ENCODE measurements at regions of chr22 and their contacts with region 1.

Region 1: DNA sequence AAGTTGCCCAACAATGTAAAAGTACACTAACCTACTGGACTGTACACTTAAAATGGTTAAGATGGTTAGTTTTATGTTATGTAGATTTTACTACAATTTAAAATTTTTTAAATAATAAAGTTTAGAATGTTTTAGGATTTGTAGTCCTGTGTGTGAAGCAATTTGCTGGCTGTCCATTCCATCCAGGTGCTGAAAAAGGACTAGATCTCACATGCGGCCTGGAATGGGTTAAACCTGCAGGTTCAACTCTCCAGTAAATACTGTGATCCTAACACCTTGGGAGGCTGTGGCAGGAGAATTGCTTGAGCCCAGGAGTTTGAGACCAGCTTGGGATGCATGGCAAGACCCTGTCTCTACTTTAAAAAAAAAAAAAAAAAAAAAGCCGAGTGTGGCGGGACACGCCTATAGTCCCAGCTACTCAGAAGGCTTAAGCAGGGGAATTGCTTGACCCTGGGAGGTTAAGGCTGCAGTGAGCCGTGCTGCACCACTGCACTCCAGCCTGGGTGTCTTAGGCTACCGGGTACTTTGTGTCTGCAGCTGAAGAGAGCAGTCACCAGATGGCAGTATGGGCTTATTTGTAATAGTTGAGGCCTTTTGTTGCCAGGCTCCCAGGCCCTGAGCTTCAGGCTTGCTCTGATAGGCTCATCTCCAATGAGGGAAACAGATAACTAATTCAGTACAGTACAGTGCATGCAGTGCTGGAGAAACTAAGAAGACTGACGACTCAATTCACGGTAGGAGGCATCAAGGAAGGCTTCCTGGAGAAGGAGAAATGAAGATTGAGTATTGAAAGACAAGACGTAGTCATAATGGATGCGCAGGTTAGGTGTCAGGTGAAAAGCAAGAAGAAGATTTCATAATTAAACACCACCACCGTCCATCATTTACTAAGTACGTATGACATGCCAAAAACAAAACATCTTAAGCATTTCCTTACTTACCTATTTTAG is 64.7 kb upstream of the ASPHD2 start:
- DNase-seq: peak; percentile 74
- ATAC-seq: peak; percentile 91
- H3K4me3 Mint-ChIP-seq: no peak overlapping the region
- H3K27ac Mint-ChIP-seq: no peak overlapping the region
- H3K4me1 Mint-ChIP-seq: peaks cover 3% of the 10 kb centered on the region
- H3K27me3 Mint-ChIP-seq: peaks cover 9% of the 10 kb centered on the region
- CTCF ChIP-seq: peak; percentile 67

Region 2: DNA sequence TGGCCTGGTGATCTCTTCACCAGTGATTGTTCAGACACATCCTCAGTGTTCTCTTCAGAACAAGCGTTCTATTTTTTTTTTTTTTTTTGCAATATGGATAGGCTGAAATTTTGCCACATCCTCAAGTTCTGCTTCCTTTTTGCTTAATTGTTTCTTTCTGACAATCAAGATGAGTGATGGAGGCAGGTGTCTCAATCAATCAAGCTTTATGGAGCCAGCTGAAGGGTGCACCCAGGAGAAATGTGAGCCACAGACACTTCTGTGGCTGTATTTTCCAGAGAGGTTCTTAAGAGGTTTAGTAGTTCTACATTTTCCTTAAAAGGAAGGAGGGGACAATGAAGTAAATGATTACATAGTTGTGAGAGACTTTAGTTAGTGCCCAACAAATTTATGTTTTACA is 20.8 kb after region 1 on chr22:
- CTCF ChIA-PET with region 1: interaction called, 101 read pairs
- POLR2A ChIA-PET with region 1: no interaction called
- intact Hi-C with region 1: no loop called
- DNase-seq: no peak
- ATAC-seq: no peak
- H3K4me3 Mint-ChIP-seq: no peak overlapping the region
- H3K27ac Mint-ChIP-seq: no peak overlapping the region
- H3K4me1 Mint-ChIP-seq: no peaks in the 10 kb centered on the region
- H3K27me3 Mint-ChIP-seq: peaks cover 32% of the 10 kb centered on the region
- CTCF ChIP-seq: no peak

Region 3: DNA sequence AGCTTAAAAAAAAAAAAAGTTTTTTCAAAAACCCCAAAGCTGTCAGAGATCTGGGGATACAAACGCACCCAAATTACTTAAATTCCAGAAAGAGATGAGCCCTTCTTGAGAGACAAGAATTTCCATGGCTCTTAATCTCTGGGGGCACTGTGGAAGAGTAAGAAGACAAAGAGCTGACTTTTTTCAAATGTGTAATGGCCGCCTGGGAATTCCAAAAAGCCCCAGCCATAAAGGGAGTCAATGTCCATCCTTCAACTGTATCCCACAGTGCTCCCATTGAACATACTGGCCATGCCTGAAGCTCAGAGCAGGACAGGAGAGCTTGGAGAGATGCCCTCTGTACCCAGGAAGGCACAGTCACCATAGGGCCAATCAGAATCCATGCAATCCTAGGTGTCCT is 27.3 kb after region 1 on chr22:
- CTCF ChIA-PET with region 1: interaction called, 101 read pairs
- POLR2A ChIA-PET with region 1: no interaction called
- intact Hi-C with region 1: no loop called
- DNase-seq: no peak
- ATAC-seq: no peak
- H3K4me3 Mint-ChIP-seq: no peak overlapping the region
- H3K27ac Mint-ChIP-seq: no peak overlapping the region
- H3K4me1 Mint-ChIP-seq: no peaks in the 10 kb centered on the region
- H3K27me3 Mint-ChIP-seq: peaks cover 19% of the 10 kb centered on the region
- CTCF ChIP-seq: no peak

Region 4: DNA sequence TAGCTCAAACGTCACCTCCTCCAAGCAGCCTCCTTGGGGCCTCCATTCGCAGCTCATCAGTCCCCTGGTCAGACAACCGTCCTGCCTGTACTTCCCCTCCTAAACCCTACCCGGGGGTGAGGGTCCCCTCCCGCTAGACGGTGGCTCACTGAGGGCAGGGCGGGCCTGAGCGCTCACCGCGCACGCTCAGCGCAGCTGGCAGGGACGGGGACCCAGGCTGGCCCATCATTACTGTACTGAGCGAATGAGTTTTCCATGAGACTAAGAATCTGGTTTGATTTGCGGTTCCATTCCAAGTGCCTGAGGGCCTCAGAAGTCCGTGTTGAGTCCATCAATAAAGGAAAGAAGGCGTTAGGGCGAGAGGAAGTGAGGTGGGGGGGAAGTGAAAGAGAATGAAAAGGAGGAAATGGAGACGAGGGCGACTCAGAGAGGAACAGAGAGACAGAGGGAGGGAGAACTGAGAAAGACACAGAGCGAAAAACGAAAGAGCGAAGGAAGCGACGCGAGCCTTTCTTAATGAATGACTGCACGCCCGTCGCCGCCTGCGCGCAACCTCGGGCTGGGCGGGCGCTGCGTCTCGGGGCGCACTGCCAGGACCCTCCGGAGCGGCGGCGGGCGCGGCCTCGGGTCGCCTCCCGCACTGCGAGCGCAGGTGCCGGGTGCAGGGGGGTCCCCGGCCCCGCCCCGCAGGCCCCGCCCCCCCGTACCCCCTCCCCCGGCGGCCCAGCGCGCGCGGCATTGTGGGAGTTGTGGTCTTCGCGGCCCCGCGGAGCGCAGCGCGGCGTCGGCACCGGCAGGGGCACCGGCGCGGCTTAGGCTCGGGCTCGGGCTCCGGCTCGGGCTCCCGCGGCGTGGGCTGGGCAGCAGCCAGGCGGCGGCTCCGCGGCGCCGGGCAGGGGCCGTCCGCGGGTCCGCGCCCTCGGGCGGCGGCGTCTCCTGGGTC is 64.4 kb after region 1 on chr22 and contains the start of gene ASPHD2:
- CTCF ChIA-PET with region 1: interaction called, 18 read pairs
- POLR2A ChIA-PET with region 1: no interaction called
- intact Hi-C with region 1: no loop called
- DNase-seq: peak; percentile 85
- ATAC-seq: peak; percentile 88
- H3K4me3 Mint-ChIP-seq: peak within 1 kb of the TSS; percentile 100
- H3K27ac Mint-ChIP-seq: peak within 1 kb of the TSS; percentile 100
- H3K4me1 Mint-ChIP-seq: peaks cover 51% of the 10 kb centered on the region
- H3K27me3 Mint-ChIP-seq: peaks cover 5% of the 10 kb centered on the region
- CTCF ChIP-seq: no peak
- total RNA-seq, gene ASPHD2: 12.0 to 14.0 TPM

Region 5: DNA sequence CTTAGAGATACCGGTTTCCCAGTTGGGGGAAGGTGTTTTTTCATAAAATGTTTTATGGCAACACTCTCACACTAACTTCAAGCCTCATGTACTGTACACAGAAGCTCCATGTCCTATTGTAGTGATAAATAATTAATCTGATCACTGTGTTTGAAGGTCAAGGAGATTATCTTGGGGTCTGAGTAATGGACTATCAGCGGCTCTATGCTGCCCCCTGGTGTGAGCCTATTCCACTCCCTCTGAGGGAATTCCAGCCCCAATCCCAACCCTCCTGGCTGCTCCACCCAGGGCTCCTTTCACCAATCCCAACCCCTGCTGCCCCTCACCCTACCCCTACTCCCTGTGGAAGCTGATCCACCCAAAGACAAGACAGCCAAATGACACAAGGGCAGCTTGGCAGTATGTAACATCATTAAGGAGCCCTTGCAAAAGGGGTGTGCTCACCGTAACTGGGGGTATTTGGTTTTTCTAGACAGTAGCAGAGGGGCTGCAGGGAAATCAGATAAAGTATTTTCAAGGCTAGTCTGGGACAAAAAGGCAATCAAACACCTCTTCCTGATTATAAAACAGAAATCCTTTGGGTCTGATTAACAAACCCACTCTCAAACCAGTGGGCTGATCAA is 97.0 kb after region 1 on chr22:
- CTCF ChIA-PET with region 1: interaction called, 71 read pairs
- POLR2A ChIA-PET with region 1: interaction called, 3 read pairs
- intact Hi-C with region 1: no loop called
- DNase-seq: peak; percentile 56
- ATAC-seq: peak; percentile 27
- H3K4me3 Mint-ChIP-seq: no peak overlapping the region
- H3K27ac Mint-ChIP-seq: no peak overlapping the region
- H3K4me1 Mint-ChIP-seq: no peaks in the 10 kb centered on the region
- H3K27me3 Mint-ChIP-seq: no peaks in the 10 kb centered on the region
- CTCF ChIP-seq: peak; percentile 80

Region 6: GRCh38 chr22:26483439-26484359 is 119.4 kb after region 1 on chr22 and contains the starts of genes HPS4 and SRRD:
- CTCF ChIA-PET with region 1: interaction called, 13 read pairs
- POLR2A ChIA-PET with region 1: no interaction called
- intact Hi-C with region 1: no loop called
- DNase-seq: peak; percentile 92
- ATAC-seq: peak; percentile 81
- H3K4me3 Mint-ChIP-seq: peak within 1 kb of the TSS; percentile 94
- H3K27ac Mint-ChIP-seq: peak within 1 kb of the TSS; percentile 98
- H3K4me1 Mint-ChIP-seq: peaks cover 61% of the 10 kb centered on the region
- H3K27me3 Mint-ChIP-seq: no peaks in the 10 kb centered on the region
- CTCF ChIP-seq: no peak
- total RNA-seq, gene HPS4: 51.8 to 53.5 TPM
- total RNA-seq, gene SRRD: 24.8 to 26.3 TPM

Region 7: GRCh38 chr22:26672590-26673468 is 308.5 kb after region 1 on chr22:
- CTCF ChIA-PET with region 1: interaction called, 9 read pairs
- POLR2A ChIA-PET with region 1: no interaction called
- intact Hi-C with region 1: loop called (anchors 10 kb)
- DNase-seq: peak; percentile 97
- ATAC-seq: peak; percentile 75
- H3K4me3 Mint-ChIP-seq: peak overlapping the region; percentile 94
- H3K27ac Mint-ChIP-seq: peak overlapping the region; percentile 95
- H3K4me1 Mint-ChIP-seq: peaks cover 65% of the 10 kb centered on the region
- H3K27me3 Mint-ChIP-seq: no peaks in the 10 kb centered on the region
- CTCF ChIP-seq: peak; percentile 12

Measured in activated CD8-positive, alpha-beta T cell treated with anti-CD3 and anti-CD28 coated beads for 36 hours (primary cell).